ENCODE measurements at regions of chr6 and their contacts with region 1.

Region 1: GRCh38 chr6:41191569-41191968 is 9.4 kb downstream of the TREML2 start:
- DNase-seq: no peak

Region 2: GRCh38 chr6:41147917-41148316 is 43.7 kb before region 1 on chr6:
- intact Hi-C with region 1: no loop called
- DNase-seq: no peak

Region 3: GRCh38 chr6:41306187-41306854 is 114.8 kb after region 1 on chr6:
- intact Hi-C with region 1: no loop called
- DNase-seq: no peak

Region 4: DNA sequence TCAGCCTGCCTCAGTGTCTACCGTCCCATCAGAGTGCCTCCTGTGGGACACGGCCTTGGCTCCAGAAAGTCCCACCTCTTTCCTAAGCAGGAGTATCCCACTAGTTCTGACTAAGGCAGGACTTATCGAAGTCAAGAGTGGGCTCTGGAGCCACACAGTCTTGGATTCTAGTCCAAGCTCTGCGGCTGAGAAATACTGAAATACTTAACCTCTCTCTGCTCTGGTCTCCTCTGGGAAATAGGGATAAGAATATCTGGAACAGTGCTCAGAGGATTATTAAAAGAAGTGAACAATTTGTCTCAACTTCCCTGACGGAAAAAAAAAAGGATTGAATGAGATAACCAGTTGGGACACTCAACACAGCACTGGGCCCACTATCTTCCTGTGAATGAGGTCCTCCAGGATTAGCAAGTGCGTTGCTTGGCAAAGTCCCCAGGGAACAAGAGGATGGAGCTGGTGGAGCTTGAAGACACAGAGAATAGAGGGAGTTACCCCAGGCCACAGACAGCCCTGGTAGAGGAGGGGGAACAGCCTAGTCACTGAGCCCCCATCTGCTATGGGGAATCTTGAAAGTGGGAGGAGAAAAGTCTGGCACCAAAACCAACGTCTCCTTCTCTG is 320.0 kb after region 1 on chr6:
- intact Hi-C with region 1: loop called in 1 of 2 experiments (anchors 5 kb)
- DNase-seq: no peak